CD4-positive, alpha-beta memory T cell (primary cell): ENCODE measurements at regions of chr3 and their contacts with region 1.

Region 1: GRCh38 chr3:42780892-42781700 is 8.0 kb upstream of the CCDC13 start:
- DNase-seq: peak in 4 of 5 donors; percentile 59 to 64 (median 61)
- H3K4me3 ChIP-seq: no peak overlapping the region
- H3K4me3 Mint-ChIP-seq: no peak overlapping the region
- H3K27ac ChIP-seq: no peak overlapping the region
- H3K27ac Mint-ChIP-seq: peak overlapping the region in 1 of 7 donors; percentile 43
- H3K4me1 ChIP-seq: no peaks in the 10 kb centered on the region
- H3K4me1 Mint-ChIP-seq: peaks cover 0 to 3% (median 2%) of the 10 kb centered on the region in 4 donors
- H3K27me3 ChIP-seq: no peaks in the 10 kb centered on the region
- H3K27me3 Mint-ChIP-seq: no peaks in the 10 kb centered on the region

Region 2: GRCh38 chr3:42451546-42452230 is 329.4 kb before region 1 on chr3:
- CTCF ChIA-PET with region 1: no interaction called
- POLR2A ChIA-PET with region 1: no interaction called
- intact Hi-C with region 1: no loop called
- DNase-seq: no peak
- H3K4me3 ChIP-seq: no peak overlapping the region
- H3K4me3 Mint-ChIP-seq: no peak overlapping the region
- H3K27ac ChIP-seq: no peak overlapping the region
- H3K27ac Mint-ChIP-seq: no peak overlapping the region
- H3K4me1 ChIP-seq: no peaks in the 10 kb centered on the region
- H3K4me1 Mint-ChIP-seq: no peaks in the 10 kb centered on the region
- H3K27me3 ChIP-seq: no peaks in the 10 kb centered on the region
- H3K27me3 Mint-ChIP-seq: peaks cover 5 to 12% of the 10 kb centered on the region in 2 donors

Region 3: DNA sequence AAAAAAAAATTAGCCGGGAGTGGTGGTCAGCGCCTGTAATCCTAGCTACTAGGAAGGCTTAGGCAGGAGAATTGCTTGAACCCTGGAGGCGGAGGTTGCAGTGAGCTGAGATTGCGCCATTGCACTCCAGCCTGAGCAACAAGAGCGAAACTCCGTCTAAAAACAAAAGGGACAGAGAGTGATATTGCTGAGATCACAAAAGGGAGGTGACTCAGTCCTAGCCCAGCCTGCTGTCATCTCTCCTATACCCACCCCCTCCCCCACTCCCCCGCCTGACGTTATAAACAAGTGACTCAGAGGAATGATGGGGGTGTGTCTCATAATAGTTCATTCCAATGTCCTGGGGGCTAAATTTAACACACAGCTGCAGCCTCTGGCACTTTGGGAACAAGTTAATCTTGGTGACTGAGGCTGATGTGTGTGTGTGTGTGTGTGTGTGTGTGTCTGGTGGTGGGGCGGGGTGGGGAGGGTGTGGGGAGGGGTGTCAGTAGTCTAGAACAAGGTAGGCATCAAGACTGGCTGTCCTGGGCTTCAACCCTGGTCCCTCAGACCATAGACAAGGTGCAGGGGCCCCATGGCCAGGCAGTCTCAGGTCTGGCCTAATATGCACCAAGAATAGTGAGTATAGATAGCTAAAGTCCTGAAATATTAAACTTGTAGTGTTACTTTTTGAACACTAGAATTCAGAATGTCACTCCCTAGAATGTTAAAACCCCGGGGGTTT is 97.1 kb before region 1 on chr3:
- CTCF ChIA-PET with region 1: no interaction called
- POLR2A ChIA-PET with region 1: no interaction called
- intact Hi-C with region 1: no loop called
- DNase-seq: no peak
- H3K4me3 ChIP-seq: no peak overlapping the region
- H3K4me3 Mint-ChIP-seq: no peak overlapping the region
- H3K27ac ChIP-seq: no peak overlapping the region
- H3K27ac Mint-ChIP-seq: peak overlapping the region in 1 of 7 donors; percentile 58
- H3K4me1 ChIP-seq: no peaks in the 10 kb centered on the region
- H3K4me1 Mint-ChIP-seq: peaks cover 0 to 2% (median 0%) of the 10 kb centered on the region in 4 donors
- H3K27me3 ChIP-seq: no peaks in the 10 kb centered on the region
- H3K27me3 Mint-ChIP-seq: peaks cover 15 to 26% of the 10 kb centered on the region in 2 donors

Region 4: DNA sequence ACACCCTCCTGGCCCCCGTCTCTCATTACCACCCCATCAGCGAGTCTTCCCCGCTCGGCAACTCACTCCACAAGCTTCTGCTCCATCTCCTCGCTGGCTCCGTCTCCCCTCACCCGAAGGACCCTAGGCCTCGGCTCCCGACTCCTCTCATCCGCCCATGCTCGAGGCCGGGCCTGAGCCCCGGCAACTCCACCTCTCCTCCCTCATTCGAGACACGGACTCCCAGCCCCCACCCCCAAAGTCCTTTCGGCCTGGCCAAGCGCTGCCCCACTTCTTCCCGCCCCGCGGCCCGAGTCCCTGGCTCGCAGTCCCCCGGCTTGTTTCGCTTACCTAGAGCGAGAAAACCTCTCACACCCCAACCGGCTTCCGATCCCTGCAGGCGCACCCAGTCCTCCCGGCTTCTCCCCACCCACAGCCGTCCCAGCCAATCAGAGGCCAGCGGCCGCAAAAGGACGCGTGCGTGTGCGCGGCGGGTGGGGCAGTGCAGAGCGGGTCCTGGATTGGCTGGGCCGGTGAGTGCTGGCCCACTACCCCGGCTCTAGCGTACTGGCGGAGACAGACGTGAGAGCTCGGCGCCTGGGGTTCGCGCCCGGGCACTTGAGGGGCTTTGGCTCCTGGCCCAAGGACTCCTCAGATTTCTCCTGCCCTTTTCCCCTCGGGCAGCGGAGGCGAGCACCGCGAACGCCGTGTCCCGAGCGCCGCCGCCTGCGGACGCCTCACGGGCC is 23.2 kb after region 1 on chr3 and contains the start of gene HIGD1A:
- CTCF ChIA-PET with region 1: interaction called, 15 read pairs
- POLR2A ChIA-PET with region 1: interaction called, 3 read pairs
- intact Hi-C with region 1: no loop called
- DNase-seq: peak; percentile 90 to 92 (median 91)
- H3K4me3 ChIP-seq: peak within 1 kb of the TSS; percentile 86 to 88
- H3K4me3 Mint-ChIP-seq: peak within 1 kb of the TSS; percentile 94 to 98 (median 96)
- H3K27ac ChIP-seq: peak within 1 kb of the TSS; percentile 81
- H3K27ac Mint-ChIP-seq: peak within 1 kb of the TSS; percentile 91 to 99 (median 96)
- H3K4me1 ChIP-seq: peaks cover 38% of the 10 kb centered on the region
- H3K4me1 Mint-ChIP-seq: peaks cover 24 to 57% (median 37%) of the 10 kb centered on the region in 4 donors
- H3K27me3 ChIP-seq: no peaks in the 10 kb centered on the region
- H3K27me3 Mint-ChIP-seq: peaks cover 6% of the 10 kb centered on the region in 2 donors
- total RNA-seq, gene HIGD1A: 24.3 to 26.7 TPM

Region 5: GRCh38 chr3:42831321-42831713 is 50.2 kb after region 1 on chr3:
- CTCF ChIA-PET with region 1: interaction called, 9 read pairs
- POLR2A ChIA-PET with region 1: interaction called, 3 read pairs
- intact Hi-C with region 1: loop called (anchors 2 kb)
- DNase-seq: peak; percentile 64 to 70 (median 65)
- H3K4me3 ChIP-seq: no peak overlapping the region
- H3K4me3 Mint-ChIP-seq: no peak overlapping the region
- H3K27ac ChIP-seq: no peak overlapping the region
- H3K27ac Mint-ChIP-seq: no peak overlapping the region
- H3K4me1 ChIP-seq: no peaks in the 10 kb centered on the region
- H3K4me1 Mint-ChIP-seq: peaks cover 0 to 6% (median 2%) of the 10 kb centered on the region in 4 donors
- H3K27me3 ChIP-seq: no peaks in the 10 kb centered on the region
- H3K27me3 Mint-ChIP-seq: peaks cover 13 to 26% of the 10 kb centered on the region in 2 donors

Region 6: DNA sequence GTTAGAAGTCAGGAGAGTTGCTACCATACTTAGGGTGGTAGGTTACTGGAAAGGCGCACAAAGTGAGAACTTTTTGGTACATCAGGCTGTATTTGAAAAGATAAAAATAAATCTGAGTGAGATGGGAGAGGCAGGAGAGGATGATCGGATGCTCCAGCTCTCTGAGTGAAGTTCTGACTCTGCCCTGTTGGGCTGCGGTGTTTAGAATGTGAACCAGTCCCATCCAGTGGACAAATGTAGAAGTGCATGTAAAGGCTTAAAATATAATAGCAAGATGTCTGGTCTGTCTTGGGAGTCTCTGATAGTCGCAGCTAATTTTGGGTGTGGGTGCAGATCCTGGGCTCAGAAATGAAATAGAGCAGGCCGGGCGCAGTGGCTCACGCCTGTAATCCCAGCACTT is 58.5 kb after region 1 on chr3:
- CTCF ChIA-PET with region 1: interaction called, 23 read pairs
- POLR2A ChIA-PET with region 1: interaction called, 4 read pairs
- intact Hi-C with region 1: loop called (anchors 1 kb)
- DNase-seq: peak; percentile 34 to 52 (median 47)
- H3K4me3 ChIP-seq: no peak overlapping the region
- H3K4me3 Mint-ChIP-seq: no peak overlapping the region
- H3K27ac ChIP-seq: no peak overlapping the region
- H3K27ac Mint-ChIP-seq: no peak overlapping the region
- H3K4me1 ChIP-seq: no peaks in the 10 kb centered on the region
- H3K4me1 Mint-ChIP-seq: no peaks in the 10 kb centered on the region
- H3K27me3 ChIP-seq: no peaks in the 10 kb centered on the region
- H3K27me3 Mint-ChIP-seq: peaks cover 2 to 20% of the 10 kb centered on the region in 2 donors

Region 7: DNA sequence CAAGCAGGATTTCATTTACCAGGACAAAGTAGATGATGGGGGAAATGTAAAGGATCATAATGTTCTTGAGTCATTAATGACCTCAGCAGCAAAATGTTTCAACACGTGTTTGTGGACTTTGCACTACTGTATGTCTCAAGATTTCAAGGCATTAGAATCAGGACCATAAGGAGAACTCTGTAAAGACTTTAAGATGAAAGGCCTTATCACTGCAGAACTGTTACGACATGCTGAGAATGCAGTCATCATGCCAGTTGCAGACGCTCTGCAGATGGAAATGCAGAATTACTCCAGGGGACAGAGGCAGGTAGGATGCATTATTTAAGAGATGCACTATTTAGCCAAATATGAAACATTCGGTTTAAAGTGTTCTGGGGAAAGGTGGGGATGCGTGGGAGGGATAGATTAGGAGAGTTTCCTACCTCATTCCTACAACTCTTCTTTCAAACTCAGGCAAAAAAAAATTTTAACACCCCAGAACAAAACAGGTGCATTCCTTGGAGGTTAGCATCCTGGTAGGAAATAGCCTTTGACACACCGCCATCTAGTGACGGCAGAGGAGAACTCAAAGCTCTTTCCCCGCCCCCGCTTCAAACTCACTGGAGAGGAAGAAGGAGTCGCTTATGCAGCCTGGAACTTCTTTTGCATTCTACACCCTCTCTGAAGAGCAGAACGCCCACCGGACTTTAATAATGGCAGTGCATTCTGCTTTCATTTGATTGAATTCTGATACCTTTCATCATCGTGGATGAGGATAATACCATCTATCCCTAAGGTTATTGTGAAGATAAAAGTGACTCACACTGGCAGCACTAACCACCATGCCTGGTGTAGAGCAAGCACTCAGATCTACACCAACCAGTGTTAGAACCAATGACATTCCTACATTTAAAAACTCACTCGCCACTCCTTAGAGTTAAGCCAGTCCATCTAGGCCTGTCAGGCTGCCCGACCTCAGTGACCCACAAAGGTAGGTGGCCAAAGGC is 1417.5 kb after region 1 on chr3:
- CTCF ChIA-PET with region 1: no interaction called
- POLR2A ChIA-PET with region 1: no interaction called
- intact Hi-C with region 1: loop called (anchors 5 kb)
- DNase-seq: peak; percentile 52 to 62 (median 56)
- H3K4me3 ChIP-seq: no peak overlapping the region
- H3K4me3 Mint-ChIP-seq: no peak overlapping the region
- H3K27ac ChIP-seq: no peak overlapping the region
- H3K27ac Mint-ChIP-seq: no peak overlapping the region
- H3K4me1 ChIP-seq: no peaks in the 10 kb centered on the region
- H3K4me1 Mint-ChIP-seq: peaks cover 0 to 6% (median under 1%) of the 10 kb centered on the region in 4 donors
- H3K27me3 ChIP-seq: no peaks in the 10 kb centered on the region
- H3K27me3 Mint-ChIP-seq: peaks cover 5 to 18% of the 10 kb centered on the region in 2 donors